Gastrocnemius medialis (tissue), 4 donors: ENCODE measurements at regions of chr2 and their contacts with region 1.

Region 1: GRCh38 chr2:23745726-23746105 is 181.2 kb downstream of the ATAD2B start:
- DNase-seq: peak; percentile 84 to 90
- ATAC-seq: peak; percentile 97 to 98
- H3K4me3 ChIP-seq: peak overlapping the region in 2 of 4 donors; percentile 26 to 41
- H3K27ac ChIP-seq: peak overlapping the region; percentile 88 to 94 (median 90)
- H3K4me1 ChIP-seq: peaks cover 22 to 25% of the 10 kb centered on the region in 2 donors
- H3K27me3 ChIP-seq: no peaks in the 10 kb centered on the region
- CTCF ChIP-seq: no peak
- POLR2A ChIP-seq: no peak

Region 2: GRCh38 chr2:23595601-23596251 is 150.0 kb before region 1 on chr2:
- in situ Hi-C with region 1: no loop called
- intact Hi-C with region 1: loop called (anchors 5 kb)
- DNase-seq: peak in 1 of 2 donors; percentile 79
- ATAC-seq: peak; percentile 48 to 64
- H3K4me3 ChIP-seq: peak overlapping the region; percentile 34 to 58 (median 47)
- H3K27ac ChIP-seq: peak overlapping the region; percentile 83 to 93 (median 88)
- H3K4me1 ChIP-seq: peaks cover 40 to 78% of the 10 kb centered on the region in 2 donors
- H3K27me3 ChIP-seq: no peaks in the 10 kb centered on the region
- CTCF ChIP-seq: peak in 1 of 5 experiments; percentile 34
- POLR2A ChIP-seq: no peak

Region 3: DNA sequence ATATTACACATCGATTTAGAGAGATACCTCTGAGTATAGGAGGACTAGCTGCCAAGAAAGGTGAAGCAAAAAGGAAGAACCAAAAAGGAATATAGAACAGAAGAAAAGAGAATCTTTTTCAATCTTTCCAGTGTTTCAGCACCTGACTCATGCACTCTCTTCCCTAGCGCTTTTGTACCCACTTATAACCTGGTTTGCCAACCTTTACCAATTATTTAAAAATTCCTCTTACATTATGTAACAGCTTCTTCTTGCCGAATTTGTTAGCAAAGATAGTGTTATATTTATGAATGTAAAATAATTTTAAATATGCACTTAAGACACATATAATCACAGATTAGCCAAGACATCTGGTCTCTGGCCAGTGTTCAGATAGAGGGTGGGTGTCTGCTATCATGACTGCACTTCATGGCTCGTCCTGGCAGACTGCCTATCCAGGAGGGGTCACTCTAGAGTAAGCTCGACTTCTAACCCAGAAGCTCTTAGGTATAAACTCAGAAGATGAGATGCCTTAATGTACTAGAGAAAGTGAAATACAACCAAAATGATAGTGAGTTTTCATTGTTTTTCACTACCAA is 58.3 kb after region 1 on chr2:
- in situ Hi-C with region 1: no loop called
- intact Hi-C with region 1: no loop called
- DNase-seq: peak in 1 of 2 donors; percentile 31
- ATAC-seq: no peak
- H3K4me3 ChIP-seq: no peak overlapping the region
- H3K27ac ChIP-seq: no peak overlapping the region
- H3K4me1 ChIP-seq: peaks cover 0 to 4% of the 10 kb centered on the region in 2 donors
- H3K27me3 ChIP-seq: no peaks in the 10 kb centered on the region
- CTCF ChIP-seq: no peak
- POLR2A ChIP-seq: no peak